Caco-2 (cell line): ENCODE measurements at regions of chr2 and their contacts with region 1.

Region 1: DNA sequence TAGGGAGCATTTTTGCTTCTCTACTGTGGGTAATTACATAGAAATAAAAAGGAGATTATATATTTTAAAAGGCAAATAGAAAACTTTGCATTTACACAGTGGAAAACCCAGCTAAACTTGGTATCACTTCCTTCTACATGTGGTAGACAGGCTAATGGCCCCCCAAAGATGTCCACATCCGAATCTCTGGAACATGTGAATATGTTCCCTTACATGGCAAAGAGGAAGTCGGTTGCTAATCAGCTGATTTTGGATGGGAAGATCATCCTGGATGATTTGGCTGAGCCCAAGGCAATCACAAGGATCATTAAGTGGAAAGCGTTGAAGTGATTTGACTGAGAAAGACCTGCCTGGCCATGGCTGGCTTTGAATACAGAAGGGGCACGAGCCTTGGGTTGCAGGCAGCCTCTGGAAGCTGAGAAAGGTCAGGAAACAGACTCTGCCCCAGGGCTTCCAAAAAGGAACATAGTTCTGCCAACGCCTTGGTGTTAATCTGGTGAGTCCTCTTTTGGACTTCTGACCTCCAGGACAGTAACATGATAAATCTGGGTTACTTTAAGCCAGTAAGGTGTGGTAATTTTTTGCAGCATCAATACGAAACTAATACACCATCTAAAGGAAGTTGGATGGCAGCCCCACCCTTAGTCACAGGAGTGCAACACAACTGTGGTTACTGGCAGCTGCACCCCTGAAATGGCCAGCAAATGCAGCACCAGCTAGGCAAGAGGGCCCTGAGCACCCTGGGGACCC is 26.0 kb downstream of the CREG2 start:
- DNase-seq: no peak
- H3K4me3 ChIP-seq: no peak overlapping the region
- H3K4me3 Mint-ChIP-seq: peak overlapping the region; percentile 19
- H3K27ac Mint-ChIP-seq: peak overlapping the region; percentile 76
- H3K4me1 ChIP-seq: peaks cover 64% of the 10 kb centered on the region
- H3K4me1 Mint-ChIP-seq: peaks cover 37% of the 10 kb centered on the region
- H3K27me3 ChIP-seq: no peaks in the 10 kb centered on the region
- H3K27me3 Mint-ChIP-seq: no peaks in the 10 kb centered on the region
- CTCF ChIP-seq: no peak

Region 2: GRCh38 chr2:101349893-101350662 is 11.2 kb before region 1 on chr2:
- CTCF ChIA-PET with region 1: interaction called, 7 read pairs
- POLR2A ChIA-PET with region 1: interaction called, 5 read pairs
- intact Hi-C with region 1: loop called (anchors 1 kb)
- DNase-seq: no peak
- H3K4me3 ChIP-seq: no peak overlapping the region
- H3K4me3 Mint-ChIP-seq: no peak overlapping the region
- H3K27ac Mint-ChIP-seq: peak overlapping the region; percentile 80
- H3K4me1 ChIP-seq: peaks cover 44% of the 10 kb centered on the region
- H3K4me1 Mint-ChIP-seq: peaks cover 38% of the 10 kb centered on the region
- H3K27me3 ChIP-seq: no peaks in the 10 kb centered on the region
- H3K27me3 Mint-ChIP-seq: no peaks in the 10 kb centered on the region
- CTCF ChIP-seq: peak; percentile 32 to 53

Region 3: DNA sequence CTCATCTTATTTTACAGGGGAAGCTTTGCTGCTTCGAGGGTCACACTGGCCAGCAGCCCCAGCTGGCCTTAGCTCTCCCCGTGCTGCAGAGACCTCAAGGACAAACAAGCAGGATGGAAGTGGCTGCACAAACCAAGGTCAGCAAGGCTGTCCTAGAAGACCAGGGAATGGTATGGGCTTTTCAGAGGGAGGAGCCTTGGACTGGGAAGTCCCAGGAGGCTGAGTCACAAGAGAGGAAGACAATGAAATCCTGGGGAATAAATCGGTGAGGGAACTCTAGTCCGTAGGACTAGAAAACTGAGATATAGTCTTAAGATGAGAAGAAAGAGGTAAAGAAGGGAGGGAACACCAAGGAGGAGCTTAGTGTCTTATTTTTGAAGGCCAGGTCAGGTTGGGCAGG is 10.3 kb after region 1 on chr2:
- CTCF ChIA-PET with region 1: interaction called, 4 read pairs
- POLR2A ChIA-PET with region 1: no interaction called
- intact Hi-C with region 1: loop called (anchors 1 kb)
- DNase-seq: no peak
- H3K4me3 ChIP-seq: no peak overlapping the region
- H3K4me3 Mint-ChIP-seq: no peak overlapping the region
- H3K27ac Mint-ChIP-seq: peak overlapping the region; percentile 80
- H3K4me1 ChIP-seq: peaks cover 44% of the 10 kb centered on the region
- H3K4me1 Mint-ChIP-seq: peaks cover 46% of the 10 kb centered on the region
- H3K27me3 ChIP-seq: no peaks in the 10 kb centered on the region
- H3K27me3 Mint-ChIP-seq: no peaks in the 10 kb centered on the region
- CTCF ChIP-seq: no peak

Region 4: DNA sequence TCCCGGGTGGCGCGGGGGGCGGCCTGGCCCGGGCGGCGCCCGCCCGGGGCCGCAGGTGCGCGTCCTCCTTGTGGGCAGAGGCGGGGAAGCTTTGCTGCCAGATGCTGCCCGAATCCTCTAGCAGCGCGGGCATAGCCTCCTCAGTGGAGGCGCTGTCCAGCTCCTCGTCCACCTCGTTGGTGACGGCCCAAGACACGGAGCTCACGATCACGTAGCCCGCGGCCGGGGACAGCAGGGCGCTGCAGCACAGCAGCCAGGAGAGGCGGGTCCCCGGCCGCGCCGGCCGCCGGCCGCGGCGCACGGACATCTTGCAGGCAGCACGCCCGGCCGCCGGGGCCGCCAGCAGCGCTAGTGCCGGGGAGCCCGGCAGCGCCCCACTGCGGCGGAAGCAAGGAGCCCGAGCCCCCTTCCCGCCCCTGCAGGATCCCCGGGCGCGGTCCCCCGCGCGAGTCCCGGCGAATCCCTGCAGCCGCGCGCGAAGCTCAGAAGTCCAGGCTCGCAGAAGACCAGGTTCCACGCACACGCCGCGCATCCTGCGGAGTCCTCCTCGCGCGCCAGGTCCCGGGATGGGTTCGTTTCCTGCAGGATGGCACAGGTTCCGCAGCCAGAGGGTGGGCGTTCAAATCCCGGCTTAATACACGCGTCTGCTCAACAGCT is 26.0 kb after region 1 on chr2 and contains the start of gene CREG2:
- CTCF ChIA-PET with region 1: interaction called, 6 read pairs
- POLR2A ChIA-PET with region 1: interaction called, 3 read pairs
- intact Hi-C with region 1: loop called (anchors 1 kb)
- DNase-seq: peak; percentile 81 to 92
- H3K4me3 ChIP-seq: peak within 1 kb of the TSS; percentile 90
- H3K4me3 Mint-ChIP-seq: peak within 1 kb of the TSS; percentile 85
- H3K27ac Mint-ChIP-seq: peak within 1 kb of the TSS; percentile 45
- H3K4me1 ChIP-seq: peaks cover 13% of the 10 kb centered on the region
- H3K4me1 Mint-ChIP-seq: peaks cover 12% of the 10 kb centered on the region
- H3K27me3 ChIP-seq: no peaks in the 10 kb centered on the region
- H3K27me3 Mint-ChIP-seq: no peaks in the 10 kb centered on the region
- CTCF ChIP-seq: peak; percentile 70 to 73
- total RNA-seq, gene CREG2: 119 and 120 TPM in 2 replicates

Region 5: DNA sequence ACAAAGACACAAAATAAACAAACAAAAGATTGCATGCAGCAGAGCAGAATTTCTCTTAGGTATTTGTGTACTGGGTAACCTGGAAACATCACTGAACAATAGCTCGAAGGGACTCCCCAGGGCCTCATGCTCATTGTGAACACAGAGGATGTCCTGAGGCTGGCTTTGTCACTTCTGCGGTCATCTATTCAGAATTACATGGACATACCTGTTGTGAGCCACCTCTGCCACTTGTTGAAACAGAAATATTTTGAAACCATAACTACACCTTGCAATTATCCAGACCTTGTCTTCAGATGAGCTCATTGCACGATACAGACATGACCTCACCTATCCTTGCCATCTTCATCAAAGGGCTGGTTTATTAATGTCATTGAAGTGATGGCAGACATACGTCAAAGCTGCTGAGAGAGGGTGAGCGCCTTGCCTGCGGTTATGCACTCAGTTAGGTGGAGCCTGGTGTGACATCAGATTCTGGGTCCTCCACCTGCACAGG is 49.5 kb after region 1 on chr2:
- CTCF ChIA-PET with region 1: no interaction called
- POLR2A ChIA-PET with region 1: no interaction called
- intact Hi-C with region 1: no loop called
- DNase-seq: peak in 1 of 2 experiments; percentile 62
- H3K4me3 ChIP-seq: no peak overlapping the region
- H3K4me3 Mint-ChIP-seq: no peak overlapping the region
- H3K27ac Mint-ChIP-seq: peak overlapping the region; percentile 49
- H3K4me1 ChIP-seq: peaks cover 14% of the 10 kb centered on the region; the same call in 1 of the 2 replicates
- H3K4me1 Mint-ChIP-seq: peaks cover 24% of the 10 kb centered on the region
- H3K27me3 ChIP-seq: no peaks in the 10 kb centered on the region
- H3K27me3 Mint-ChIP-seq: no peaks in the 10 kb centered on the region
- CTCF ChIP-seq: no peak

Region 6: DNA sequence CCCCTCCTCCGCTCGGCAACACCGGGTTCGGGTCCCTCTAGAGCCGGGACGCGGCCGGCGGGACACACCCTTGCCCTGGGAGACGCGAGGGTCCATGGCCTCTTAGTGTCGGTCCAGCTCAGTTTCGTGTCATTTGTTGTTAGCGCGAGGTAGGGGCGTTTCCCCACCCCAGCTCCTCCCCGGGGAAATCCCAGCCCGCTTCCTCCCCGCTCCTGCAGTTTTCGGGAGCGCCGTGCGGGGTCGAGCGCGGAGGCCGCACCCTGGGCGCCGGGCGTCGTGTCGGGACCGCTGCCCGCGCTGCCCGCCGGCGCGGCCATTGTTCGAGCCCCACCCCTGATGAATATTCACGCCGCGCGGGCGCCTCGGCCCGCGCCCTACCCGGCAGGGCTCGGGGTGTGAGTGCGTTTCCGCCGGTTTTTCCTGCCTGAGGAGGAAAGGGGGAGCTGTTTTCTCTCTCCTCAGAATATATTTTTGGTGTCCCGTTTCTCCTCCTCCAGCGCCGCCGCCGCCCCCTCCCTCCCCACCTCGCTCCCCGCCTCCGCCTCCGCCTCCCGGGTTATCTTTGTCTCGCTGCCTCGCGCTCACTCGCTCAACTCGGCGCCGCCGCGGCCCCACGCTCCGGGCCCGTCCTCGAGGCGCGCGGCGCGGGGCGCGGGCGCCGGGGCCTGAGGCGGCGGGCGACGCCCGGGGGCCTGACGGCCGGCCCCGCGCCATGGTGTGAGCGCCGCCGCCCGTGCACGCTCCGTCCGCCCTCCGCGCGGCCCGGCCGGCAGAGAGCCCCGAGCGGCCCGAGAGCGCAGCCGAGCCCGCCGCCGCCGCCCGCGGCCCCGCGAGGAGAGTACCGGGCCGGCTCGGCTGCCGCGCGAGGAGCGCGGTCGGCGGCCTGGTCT is 336.1 kb after region 1 on chr2 and contains the start of gene MAP4K4:
- CTCF ChIA-PET with region 1: no interaction called
- POLR2A ChIA-PET with region 1: no interaction called
- intact Hi-C with region 1: loop called (anchors 5 kb)
- DNase-seq: peak; percentile 86 to 87
- H3K4me3 ChIP-seq: peak within 1 kb of the TSS; percentile 47
- H3K4me3 Mint-ChIP-seq: no peak within 1 kb of the TSS
- H3K27ac Mint-ChIP-seq: peak within 1 kb of the TSS; percentile 82
- H3K4me1 ChIP-seq: peaks cover 27% of the 10 kb centered on the region
- H3K4me1 Mint-ChIP-seq: peaks cover 17% of the 10 kb centered on the region
- H3K27me3 ChIP-seq: no peaks in the 10 kb centered on the region
- H3K27me3 Mint-ChIP-seq: no peaks in the 10 kb centered on the region
- CTCF ChIP-seq: peak in 1 of 2 experiments; percentile 25
- total RNA-seq, gene MAP4K4: 257 and 263 TPM in 2 replicates